ENCODE measurements at regions of chr17 and their contacts with region 1.

Region 1: DNA sequence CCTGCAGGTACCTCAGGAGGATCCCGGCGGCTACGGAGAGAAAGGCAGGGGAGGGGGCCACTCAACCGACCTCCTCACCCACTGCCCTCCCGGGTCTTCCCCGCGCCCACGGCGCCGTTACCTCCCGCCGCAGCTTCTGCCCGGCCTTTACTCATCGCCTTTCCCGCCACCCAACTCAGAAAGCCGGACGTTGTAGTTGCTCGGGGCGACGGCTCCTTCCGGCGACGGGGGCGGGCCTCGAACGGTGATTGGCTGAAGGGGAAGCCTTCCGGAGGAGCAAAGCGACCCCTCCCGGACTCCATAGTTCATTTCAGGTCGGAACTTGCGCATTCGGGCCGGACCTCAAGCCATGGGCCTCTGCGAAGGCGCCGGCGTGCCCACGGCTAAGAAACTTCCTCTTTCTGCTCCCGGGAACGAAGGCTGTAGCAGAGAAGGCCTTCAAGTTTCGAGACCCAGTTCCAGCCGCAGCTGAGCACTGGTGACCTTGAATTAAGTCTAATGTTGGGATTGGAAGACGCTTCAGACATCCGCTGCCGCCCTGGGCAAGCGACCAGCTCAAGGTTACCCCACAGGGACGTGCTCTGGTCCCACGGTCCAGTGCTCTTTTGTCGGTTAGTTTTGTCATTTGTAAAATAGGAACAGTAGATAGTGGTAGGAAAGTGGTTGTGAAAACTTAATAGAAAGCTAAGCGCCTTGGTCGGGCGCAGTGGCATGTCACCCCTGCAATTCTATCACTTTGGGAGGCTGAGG is at the start of gene PSMC3IP:
- DNase-seq: peak; percentile 94 to 97
- H3K4me3 ChIP-seq: peak within 1 kb of the TSS; percentile 76
- H3K4me1 ChIP-seq: peaks cover 14% of the 10 kb centered on the region; the same call in 1 of the 2 replicates
- H3K27me3 ChIP-seq: no peaks in the 10 kb centered on the region

Region 2: DNA sequence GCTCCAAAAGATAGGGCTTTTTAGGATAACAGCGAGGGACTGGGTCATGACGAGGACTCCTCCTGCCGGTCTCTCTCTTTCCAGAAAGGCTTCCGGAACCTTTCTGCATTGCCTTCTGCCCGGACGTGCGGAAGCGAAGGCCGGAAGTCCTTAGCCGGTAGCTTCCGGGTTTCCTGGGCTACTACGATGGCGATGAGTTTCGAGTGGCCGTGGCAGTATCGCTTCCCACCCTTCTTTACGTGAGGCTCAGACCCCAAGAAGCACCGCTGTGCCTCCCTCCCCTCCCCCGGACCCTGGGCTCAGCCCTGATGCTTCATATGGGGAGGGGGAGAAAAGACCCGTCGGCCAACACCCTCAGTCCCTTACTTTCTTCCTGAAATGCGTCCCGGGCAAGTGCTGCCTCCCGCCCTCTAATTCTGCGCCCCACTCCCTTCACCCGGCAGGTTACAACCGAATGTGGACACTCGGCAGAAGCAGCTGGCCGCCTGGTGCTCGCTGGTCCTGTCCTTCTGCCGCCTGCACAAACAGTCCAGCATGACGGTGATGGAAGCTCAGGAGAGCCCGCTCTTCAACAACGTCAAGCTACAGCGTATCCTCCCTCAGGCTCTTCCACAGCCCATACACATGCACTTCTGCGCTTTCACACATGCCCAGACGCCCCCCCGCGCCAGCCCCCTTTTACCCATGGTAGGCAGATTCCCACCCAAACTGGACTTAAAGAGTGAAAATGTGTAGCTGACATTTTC is 195.8 kb after region 1 on chr17 and contains the start of gene VPS25:
- in situ Hi-C with region 1: loop called (anchors 25 kb)
- DNase-seq: peak; percentile 84 to 85
- H3K4me3 ChIP-seq: peak within 1 kb of the TSS; percentile 77
- H3K4me1 ChIP-seq: peaks cover 3% of the 10 kb centered on the region; the same call in 1 of the 2 replicates
- H3K27me3 ChIP-seq: no peaks in the 10 kb centered on the region

Region 3: GRCh38 chr17:42832974-42833766 is 255.5 kb after region 1 on chr17 and contains the start of gene PSME3:
- in situ Hi-C with region 1: loop called (anchors 10 kb)
- DNase-seq: peak; percentile 92
- H3K4me3 ChIP-seq: peak within 1 kb of the TSS; percentile 76
- H3K4me1 ChIP-seq: peaks cover 7% of the 10 kb centered on the region
- H3K27me3 ChIP-seq: no peaks in the 10 kb centered on the region

Region 4: GRCh38 chr17:42928714-42929496 is 351.2 kb after region 1 on chr17:
- in situ Hi-C with region 1: loop called (anchors 25 kb)
- DNase-seq: peak; percentile 33 to 39
- H3K4me3 ChIP-seq: no peak overlapping the region
- H3K4me1 ChIP-seq: no peaks in the 10 kb centered on the region
- H3K27me3 ChIP-seq: peaks cover 2% of the 10 kb centered on the region; the same call in 1 of the 2 replicates

Measured in HAP-1 (cell line).